ENCODE measurements at regions of chr3 and their contacts with region 1.

Region 1: GRCh38 chr3:112734718-112735350 is 93.9 kb upstream of the CCDC80 start:
- DNase-seq: peak; percentile 27 to 85 (median 53)
- ATAC-seq: peak; percentile 63
- H3K4me3 ChIP-seq: no peak overlapping the region
- H3K4me3 Mint-ChIP-seq: no peak overlapping the region
- H3K27ac ChIP-seq: no peak overlapping the region
- H3K27ac Mint-ChIP-seq: no peak overlapping the region
- H3K4me1 ChIP-seq: peaks cover 37% of the 10 kb centered on the region
- H3K4me1 Mint-ChIP-seq: peaks cover 47% of the 10 kb centered on the region
- H3K27me3 ChIP-seq: no peaks in the 10 kb centered on the region
- H3K27me3 Mint-ChIP-seq: no peaks in the 10 kb centered on the region
- CTCF ChIP-seq: peak; percentile 78

Region 2: GRCh38 chr3:112681822-112682325 is 53.0 kb before region 1 on chr3:
- CTCF ChIA-PET with region 1: no interaction called
- POLR2A ChIA-PET with region 1: no interaction called
- intact Hi-C with region 1: no loop called
- DNase-seq: no peak
- ATAC-seq: no peak
- H3K4me3 ChIP-seq: no peak overlapping the region
- H3K4me3 Mint-ChIP-seq: no peak overlapping the region
- H3K27ac ChIP-seq: no peak overlapping the region
- H3K27ac Mint-ChIP-seq: no peak overlapping the region
- H3K4me1 ChIP-seq: peaks cover 3% of the 10 kb centered on the region
- H3K4me1 Mint-ChIP-seq: peaks cover 4% of the 10 kb centered on the region
- H3K27me3 ChIP-seq: no peaks in the 10 kb centered on the region
- H3K27me3 Mint-ChIP-seq: no peaks in the 10 kb centered on the region
- CTCF ChIP-seq: no peak

Region 3: GRCh38 chr3:112746675-112747280 is 11.9 kb after region 1 on chr3:
- CTCF ChIA-PET with region 1: interaction called, 14 read pairs
- POLR2A ChIA-PET with region 1: interaction called, 4 read pairs
- intact Hi-C with region 1: no loop called
- DNase-seq: no peak
- ATAC-seq: no peak
- H3K4me3 ChIP-seq: no peak overlapping the region
- H3K4me3 Mint-ChIP-seq: no peak overlapping the region
- H3K27ac ChIP-seq: no peak overlapping the region
- H3K27ac Mint-ChIP-seq: no peak overlapping the region
- H3K4me1 ChIP-seq: peaks cover 5% of the 10 kb centered on the region
- H3K4me1 Mint-ChIP-seq: peaks cover 8% of the 10 kb centered on the region
- H3K27me3 ChIP-seq: no peaks in the 10 kb centered on the region
- H3K27me3 Mint-ChIP-seq: no peaks in the 10 kb centered on the region
- CTCF ChIP-seq: no peak

Region 4: DNA sequence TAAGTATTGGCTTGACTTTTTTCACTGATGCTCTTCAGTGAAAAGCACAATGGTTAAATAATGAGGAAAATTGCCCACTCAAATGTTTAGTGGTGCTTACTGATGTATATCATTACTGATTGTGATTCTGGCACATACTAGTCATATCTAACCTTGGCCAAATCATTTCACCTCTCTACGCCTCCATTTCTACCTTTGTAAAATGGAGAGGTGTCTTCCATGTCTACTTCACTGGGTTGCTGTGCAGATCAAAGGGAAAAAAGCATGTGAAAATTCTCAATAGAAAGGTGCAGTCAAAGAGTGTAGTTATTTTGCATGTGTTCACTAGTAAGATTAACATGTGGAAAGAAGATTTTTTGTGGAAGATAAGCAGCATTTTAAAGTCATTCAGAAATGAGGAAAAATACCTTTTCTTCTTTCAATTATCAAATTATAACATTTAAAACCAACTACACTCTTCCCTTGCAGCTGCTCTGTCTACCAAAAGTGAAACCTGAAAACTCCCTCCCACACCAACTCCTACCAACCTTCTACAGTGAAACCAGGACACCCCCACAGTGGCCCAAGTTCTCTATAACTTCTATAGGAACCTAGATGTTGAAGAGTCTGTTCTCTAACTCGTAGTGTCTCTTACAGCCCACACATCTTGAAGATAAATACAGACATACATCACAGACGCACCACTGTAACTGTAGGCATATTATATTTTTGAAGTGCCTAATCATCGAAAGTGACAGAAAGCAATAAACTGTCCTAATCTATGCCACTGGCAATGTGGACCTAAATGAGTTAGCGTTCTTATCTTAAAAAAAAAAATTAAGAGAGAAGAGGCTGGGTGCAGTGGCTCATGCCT is 238.7 kb after region 1 on chr3:
- CTCF ChIA-PET with region 1: interaction called, 31 read pairs
- POLR2A ChIA-PET with region 1: interaction called, 9 read pairs
- intact Hi-C with region 1: no loop called
- DNase-seq: peak in 7 of 14 experiments; percentile 13 to 69 (median 50)
- ATAC-seq: peak; percentile 81
- H3K4me3 ChIP-seq: peak overlapping the region; percentile 65
- H3K4me3 Mint-ChIP-seq: peak overlapping the region; percentile 92
- H3K27ac ChIP-seq: peak overlapping the region; percentile 65 to 69
- H3K27ac Mint-ChIP-seq: peak overlapping the region; percentile 94
- H3K4me1 ChIP-seq: peaks cover 34% of the 10 kb centered on the region
- H3K4me1 Mint-ChIP-seq: peaks cover 94% of the 10 kb centered on the region
- H3K27me3 ChIP-seq: no peaks in the 10 kb centered on the region
- H3K27me3 Mint-ChIP-seq: no peaks in the 10 kb centered on the region
- CTCF ChIP-seq: no peak

Region 5: DNA sequence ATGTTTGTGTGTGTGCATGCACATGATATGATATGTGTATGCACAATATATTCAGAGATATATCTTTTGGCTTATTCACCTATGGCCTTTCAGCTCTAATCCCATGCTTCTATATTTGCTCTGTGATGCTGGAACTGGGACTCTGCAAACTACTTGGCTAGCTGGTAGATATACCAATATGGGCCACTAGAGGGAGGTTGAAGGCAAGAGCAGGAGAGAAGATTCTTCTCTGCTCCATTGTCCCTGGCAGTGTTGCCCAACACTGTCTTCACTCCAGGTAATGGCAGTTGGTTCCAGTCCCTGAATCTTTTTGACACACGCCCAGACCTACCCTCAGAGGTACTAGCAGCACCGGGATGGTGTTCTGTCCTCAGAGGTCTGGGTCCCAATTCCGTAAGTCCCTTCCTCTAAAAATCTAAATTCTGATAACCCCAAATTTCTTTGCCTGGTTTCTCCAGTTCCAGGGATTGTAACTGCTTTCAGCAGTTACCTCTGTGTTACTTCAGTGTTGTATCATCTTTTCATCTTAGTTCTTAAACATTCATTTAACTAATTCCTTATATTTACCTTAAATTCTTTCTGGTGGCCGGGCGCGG is 300.7 kb after region 1 on chr3:
- CTCF ChIA-PET with region 1: interaction called, 5 read pairs
- POLR2A ChIA-PET with region 1: no interaction called
- intact Hi-C with region 1: loop called in 1 of 2 experiments (anchors 5 kb)
- DNase-seq: peak in 10 of 14 experiments; percentile 3 to 76 (median 8)
- ATAC-seq: peak; percentile 84
- H3K4me3 ChIP-seq: no peak overlapping the region
- H3K4me3 Mint-ChIP-seq: no peak overlapping the region
- H3K27ac ChIP-seq: no peak overlapping the region
- H3K27ac Mint-ChIP-seq: no peak overlapping the region
- H3K4me1 ChIP-seq: no peaks in the 10 kb centered on the region
- H3K4me1 Mint-ChIP-seq: peaks cover 5% of the 10 kb centered on the region
- H3K27me3 ChIP-seq: no peaks in the 10 kb centered on the region
- H3K27me3 Mint-ChIP-seq: no peaks in the 10 kb centered on the region
- CTCF ChIP-seq: peak; percentile 88

Region 6: GRCh38 chr3:113241292-113242095 is 506.7 kb after region 1 on chr3:
- CTCF ChIA-PET with region 1: no interaction called
- POLR2A ChIA-PET with region 1: no interaction called
- intact Hi-C with region 1: no loop called
- DNase-seq: no peak
- ATAC-seq: no peak
- H3K4me3 ChIP-seq: no peak overlapping the region
- H3K4me3 Mint-ChIP-seq: no peak overlapping the region
- H3K27ac ChIP-seq: no peak overlapping the region
- H3K27ac Mint-ChIP-seq: no peak overlapping the region
- H3K4me1 ChIP-seq: no peaks in the 10 kb centered on the region
- H3K4me1 Mint-ChIP-seq: peaks cover 13% of the 10 kb centered on the region
- H3K27me3 ChIP-seq: no peaks in the 10 kb centered on the region
- H3K27me3 Mint-ChIP-seq: no peaks in the 10 kb centered on the region
- CTCF ChIP-seq: no peak

Region 7: GRCh38 chr3:113287803-113288648 is 553.2 kb after region 1 on chr3:
- CTCF ChIA-PET with region 1: interaction called, 3 read pairs
- POLR2A ChIA-PET with region 1: no interaction called
- intact Hi-C with region 1: loop called (anchors 5 kb)
- DNase-seq: peak in 12 of 14 experiments; percentile 12 to 72 (median 38)
- ATAC-seq: peak; percentile 61
- H3K4me3 ChIP-seq: no peak overlapping the region
- H3K4me3 Mint-ChIP-seq: no peak overlapping the region
- H3K27ac ChIP-seq: no peak overlapping the region
- H3K27ac Mint-ChIP-seq: no peak overlapping the region
- H3K4me1 ChIP-seq: no peaks in the 10 kb centered on the region
- H3K4me1 Mint-ChIP-seq: no peaks in the 10 kb centered on the region
- H3K27me3 ChIP-seq: no peaks in the 10 kb centered on the region
- H3K27me3 Mint-ChIP-seq: no peaks in the 10 kb centered on the region
- CTCF ChIP-seq: peak; percentile 99

Measured in CD4-positive, alpha-beta T cell (primary cell).